Sigmoid colon (tissue), 7 donors: ENCODE measurements at regions of chr1 and their contacts with region 1.

Region 1: DNA sequence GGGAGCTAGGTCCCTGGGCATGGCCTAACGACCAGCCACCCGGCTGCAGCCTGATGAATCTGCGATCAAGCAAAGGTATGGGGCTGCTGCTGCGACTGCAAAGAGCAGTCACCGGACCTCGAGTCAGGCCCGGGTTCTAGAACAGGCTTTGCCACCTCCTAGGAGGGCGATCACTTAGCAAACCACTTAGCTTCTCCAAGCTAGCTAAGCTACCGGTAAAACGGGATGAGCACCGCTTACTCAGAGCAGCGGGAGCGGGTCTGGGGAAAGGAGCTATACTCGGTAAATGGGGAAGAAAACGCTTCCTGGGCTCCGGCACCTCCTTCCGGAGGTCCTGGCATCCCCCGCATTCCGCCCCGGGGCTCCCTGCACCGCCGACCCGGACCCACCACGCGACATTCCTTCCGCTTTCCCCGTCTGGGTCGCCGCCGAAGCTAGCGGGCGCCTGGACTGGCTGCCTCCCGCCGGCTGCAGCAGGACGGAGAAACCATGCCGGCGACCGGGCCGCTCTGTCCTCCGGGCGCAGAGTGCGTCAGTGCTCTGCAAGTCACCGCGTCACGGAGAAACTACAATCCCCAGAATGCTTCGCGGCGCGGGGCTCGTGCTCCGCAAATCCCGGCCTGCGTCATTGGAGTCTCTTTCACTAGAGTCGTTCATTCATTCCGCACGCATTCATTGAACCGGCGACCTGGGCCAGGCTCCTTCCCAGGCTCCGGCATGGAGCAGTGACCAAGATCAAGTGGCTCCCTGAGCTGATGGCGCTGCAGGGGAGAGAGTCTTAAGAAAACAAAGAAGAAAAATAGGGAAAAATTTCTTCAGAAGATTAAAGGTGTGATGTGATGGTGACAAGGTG is at the start of gene LSM10:
- DNase-seq: peak; percentile 98
- H3K4me3 ChIP-seq: peak within 1 kb of the TSS; percentile 67 to 99 (median 94)
- H3K27ac ChIP-seq: peak within 1 kb of the TSS; percentile 92 to 98 (median 98)
- H3K4me1 ChIP-seq: peaks cover 0 to 29% (median 15%) of the 10 kb centered on the region in 4 donors
- H3K27me3 ChIP-seq: no peaks in the 10 kb centered on the region
- CTCF ChIP-seq: no peak
- EP300 ChIP-seq: peak in 1 of 4 donors; percentile 84
- POLR2A ChIP-seq: peak; percentile 98 to 99
- total RNA-seq, gene LSM10: 56.6 to 114 (median 90.0) TPM

Region 2: DNA sequence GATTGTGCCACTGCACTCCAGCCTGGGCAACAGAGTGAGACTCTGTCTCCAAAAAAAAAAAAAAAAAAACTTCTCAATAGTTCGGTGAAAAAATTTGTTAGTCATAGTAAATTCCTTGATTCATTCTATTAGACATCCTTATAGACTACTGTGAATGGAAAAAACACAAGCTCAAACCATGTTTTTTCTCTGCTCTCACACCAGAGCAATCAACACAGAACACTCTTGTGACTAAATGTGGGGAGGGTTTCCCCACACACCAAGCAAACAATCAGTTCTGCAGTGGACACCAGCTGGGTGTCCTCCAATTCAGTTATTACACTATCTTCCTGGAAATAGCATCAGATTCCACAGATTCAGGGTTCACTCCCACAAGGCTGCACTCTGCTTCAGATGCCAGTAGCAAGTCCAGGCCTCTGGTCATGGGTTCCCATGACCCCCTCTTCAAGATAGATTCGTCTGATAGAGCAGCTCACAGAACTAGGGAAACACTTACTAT is 382.8 kb before region 1 on chr1:
- intact Hi-C with region 1: no loop called
- DNase-seq: no peak
- H3K4me3 ChIP-seq: no peak overlapping the region
- H3K27ac ChIP-seq: no peak overlapping the region
- H3K4me1 ChIP-seq: no peaks in the 10 kb centered on the region
- H3K27me3 ChIP-seq: no peaks in the 10 kb centered on the region
- CTCF ChIP-seq: no peak
- EP300 ChIP-seq: no peak
- POLR2A ChIP-seq: no peak

Region 3: GRCh38 chr1:36342481-36343478 is 54.8 kb before region 1 on chr1:
- intact Hi-C with region 1: no loop called
- DNase-seq: peak; percentile 75
- H3K4me3 ChIP-seq: no peak overlapping the region
- H3K27ac ChIP-seq: peak overlapping the region; percentile 15 to 58 (median 42)
- H3K4me1 ChIP-seq: peaks cover 0 to 6% (median 2%) of the 10 kb centered on the region in 4 donors
- H3K27me3 ChIP-seq: no peaks in the 10 kb centered on the region
- CTCF ChIP-seq: peak; percentile 36 to 67 (median 56)
- EP300 ChIP-seq: no peak
- POLR2A ChIP-seq: no peak

Region 4: GRCh38 chr1:36385410-36386257 is 12.0 kb before region 1 on chr1 and contains the start of gene STK40:
- intact Hi-C with region 1: loop called (anchors 1 kb)
- DNase-seq: peak; percentile 99
- H3K4me3 ChIP-seq: peak within 1 kb of the TSS; percentile 78 to 97 (median 90)
- H3K27ac ChIP-seq: peak within 1 kb of the TSS; percentile 95 to 98 (median 97)
- H3K4me1 ChIP-seq: peaks cover 0 to 77% (median 66%) of the 10 kb centered on the region in 4 donors
- H3K27me3 ChIP-seq: no peaks in the 10 kb centered on the region
- CTCF ChIP-seq: no peak
- EP300 ChIP-seq: peak in 1 of 4 donors; percentile 28
- POLR2A ChIP-seq: peak in 1 of 2 donors; percentile 7
- total RNA-seq, gene STK40: 37.1 to 49.4 (median 43.5) TPM

Region 5: DNA sequence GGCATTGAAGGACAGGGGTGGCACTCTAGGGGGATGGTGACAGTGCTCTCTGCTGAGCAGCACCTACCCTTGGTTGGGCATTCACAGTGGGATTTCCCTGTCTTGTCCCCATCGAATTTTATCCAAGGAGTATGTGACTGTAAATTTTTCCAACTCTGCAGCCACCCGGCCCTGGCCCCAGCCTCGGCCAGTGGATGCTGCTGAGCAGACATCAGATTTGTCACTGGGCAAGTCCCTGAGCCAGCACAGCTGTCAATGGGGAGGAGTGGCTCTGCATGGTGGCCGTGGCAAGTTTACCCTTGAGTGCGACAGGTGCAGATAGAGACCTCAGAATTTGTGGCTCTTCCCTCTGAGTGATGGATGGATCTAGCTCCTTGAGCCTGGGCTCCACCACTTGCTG is 325.3 kb after region 1 on chr1:
- intact Hi-C with region 1: no loop called
- DNase-seq: no peak
- H3K4me3 ChIP-seq: no peak overlapping the region
- H3K27ac ChIP-seq: no peak overlapping the region
- H3K4me1 ChIP-seq: no peaks in the 10 kb centered on the region
- H3K27me3 ChIP-seq: peaks cover 0 to 30% (median 0%) of the 10 kb centered on the region in 3 donors
- CTCF ChIP-seq: no peak
- EP300 ChIP-seq: no peak
- POLR2A ChIP-seq: no peak

Region 6: GRCh38 chr1:36735939-36736730 is 338.5 kb after region 1 on chr1:
- intact Hi-C with region 1: no loop called
- DNase-seq: peak; percentile 20
- H3K4me3 ChIP-seq: no peak overlapping the region
- H3K27ac ChIP-seq: no peak overlapping the region
- H3K4me1 ChIP-seq: no peaks in the 10 kb centered on the region
- H3K27me3 ChIP-seq: peaks cover 0 to 52% (median 5%) of the 10 kb centered on the region in 3 donors
- CTCF ChIP-seq: no peak
- EP300 ChIP-seq: no peak
- POLR2A ChIP-seq: no peak